RWPE1 (cell line): ENCODE measurements at regions of chr5 and their contacts with region 1.

Region 1: GRCh38 chr5:93649234-93649900 is 66.3 kb downstream of the NR2F1 start:
- DNase-seq: no peak
- H3K27ac ChIP-seq: no peak overlapping the region
- CTCF ChIP-seq: no peak

Region 2: DNA sequence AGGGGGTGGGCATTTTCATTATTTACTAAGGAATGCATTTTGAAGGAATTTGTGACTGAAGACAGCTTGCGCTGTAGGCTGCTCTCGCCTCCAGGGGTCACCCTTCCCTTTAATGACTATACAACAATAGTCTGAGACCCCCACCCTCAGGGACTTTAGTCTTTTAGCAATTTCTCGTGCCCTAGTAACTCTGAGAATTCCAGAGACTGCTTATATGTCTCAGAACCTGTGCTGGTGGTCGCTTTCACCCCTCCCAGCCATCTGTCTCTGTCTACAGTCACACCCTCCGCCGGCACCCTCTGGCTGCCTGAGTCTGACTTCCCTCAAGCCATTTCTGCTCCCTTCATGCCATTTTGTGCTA is 739.8 kb before region 1 on chr5:
- CTCF ChIA-PET with region 1: no interaction called
- POLR2A ChIA-PET with region 1: no interaction called
- DNase-seq: no peak
- H3K27ac ChIP-seq: no peak overlapping the region
- CTCF ChIP-seq: no peak; the same call in 1 of the 2 replicates

Region 3: GRCh38 chr5:93607367-93608258 is 41.8 kb before region 1 on chr5:
- CTCF ChIA-PET with region 1: interaction called, 10 read pairs
- POLR2A ChIA-PET with region 1: no interaction called
- DNase-seq: peak; percentile 35
- H3K27ac ChIP-seq: no peak overlapping the region
- CTCF ChIP-seq: peak; percentile 79

Region 4: GRCh38 chr5:93635991-93636390 is 13.4 kb before region 1 on chr5:
- CTCF ChIA-PET with region 1: no interaction called
- POLR2A ChIA-PET with region 1: no interaction called
- DNase-seq: no peak
- H3K27ac ChIP-seq: no peak overlapping the region
- CTCF ChIP-seq: no peak